ENCODE measurements at regions of chr5 and their contacts with region 1.

Region 1: GRCh38 chr5:142167458-142167857 is 58.9 kb downstream of the NDFIP1 start:
- DNase-seq: no peak
- H3K4me3 ChIP-seq: no peak overlapping the region
- H3K27ac ChIP-seq: no peak overlapping the region
- H3K4me1 ChIP-seq: no peaks in the 10 kb centered on the region
- H3K27me3 ChIP-seq: no peaks in the 10 kb centered on the region
- CTCF ChIP-seq: no peak
- EP300 ChIP-seq: no peak
- POLR2A ChIP-seq: no peak

Region 2: DNA sequence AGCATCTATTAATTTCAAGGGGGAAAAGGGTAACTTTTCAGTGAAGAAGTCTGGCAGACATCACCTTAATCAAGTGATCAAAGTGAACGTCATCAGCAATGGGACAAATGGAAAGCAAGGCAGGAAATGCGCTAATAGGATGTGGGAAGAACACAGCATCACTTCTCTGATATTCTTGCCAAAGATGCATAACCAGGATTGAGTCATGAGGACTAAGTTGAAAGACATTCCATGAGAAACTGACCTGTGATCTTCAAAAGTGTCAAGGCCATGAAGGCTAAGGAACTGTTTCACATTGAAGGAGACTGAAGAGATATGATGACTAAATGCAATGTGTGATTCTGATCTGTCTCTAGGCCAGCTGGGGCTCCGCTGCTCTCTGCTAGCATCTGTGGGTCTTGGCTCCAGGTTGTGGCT is 34.0 kb after region 1 on chr5:
- in situ Hi-C with region 1: no loop called
- intact Hi-C with region 1: no loop called
- DNase-seq: no peak
- H3K4me3 ChIP-seq: no peak overlapping the region
- H3K27ac ChIP-seq: no peak overlapping the region
- H3K4me1 ChIP-seq: no peaks in the 10 kb centered on the region
- H3K27me3 ChIP-seq: no peaks in the 10 kb centered on the region
- CTCF ChIP-seq: no peak
- EP300 ChIP-seq: no peak
- POLR2A ChIP-seq: no peak

Region 3: GRCh38 chr5:143564417-143564816 is 1397.0 kb after region 1 on chr5:
- in situ Hi-C with region 1: no loop called
- intact Hi-C with region 1: loop called (anchors 5 kb)
- DNase-seq: no peak
- H3K4me3 ChIP-seq: no peak overlapping the region
- H3K27ac ChIP-seq: no peak overlapping the region
- H3K4me1 ChIP-seq: peaks cover 0 to 1% (median 0%) of the 10 kb centered on the region in 4 donors
- H3K27me3 ChIP-seq: no peaks in the 10 kb centered on the region
- CTCF ChIP-seq: no peak
- EP300 ChIP-seq: no peak
- POLR2A ChIP-seq: no peak

Measured in transverse colon (tissue), 4 donors.